Activated T-helper 1 cell treated with anti-CD3 and anti-CD28 coated beads, Interleukin-12 subunit alpha, Interleukin-12 subunit beta, Interleukin-2, Interleukin-4 antibody, amounts not matched to agents 30 ng/mL and 10 ng/mL and 1 ng/mL, durations not matched to agents 14 hours and 24 hours and 36 hours (primary cell): ENCODE measurements at regions of chr11 and their contacts with region 1.

Region 1: DNA sequence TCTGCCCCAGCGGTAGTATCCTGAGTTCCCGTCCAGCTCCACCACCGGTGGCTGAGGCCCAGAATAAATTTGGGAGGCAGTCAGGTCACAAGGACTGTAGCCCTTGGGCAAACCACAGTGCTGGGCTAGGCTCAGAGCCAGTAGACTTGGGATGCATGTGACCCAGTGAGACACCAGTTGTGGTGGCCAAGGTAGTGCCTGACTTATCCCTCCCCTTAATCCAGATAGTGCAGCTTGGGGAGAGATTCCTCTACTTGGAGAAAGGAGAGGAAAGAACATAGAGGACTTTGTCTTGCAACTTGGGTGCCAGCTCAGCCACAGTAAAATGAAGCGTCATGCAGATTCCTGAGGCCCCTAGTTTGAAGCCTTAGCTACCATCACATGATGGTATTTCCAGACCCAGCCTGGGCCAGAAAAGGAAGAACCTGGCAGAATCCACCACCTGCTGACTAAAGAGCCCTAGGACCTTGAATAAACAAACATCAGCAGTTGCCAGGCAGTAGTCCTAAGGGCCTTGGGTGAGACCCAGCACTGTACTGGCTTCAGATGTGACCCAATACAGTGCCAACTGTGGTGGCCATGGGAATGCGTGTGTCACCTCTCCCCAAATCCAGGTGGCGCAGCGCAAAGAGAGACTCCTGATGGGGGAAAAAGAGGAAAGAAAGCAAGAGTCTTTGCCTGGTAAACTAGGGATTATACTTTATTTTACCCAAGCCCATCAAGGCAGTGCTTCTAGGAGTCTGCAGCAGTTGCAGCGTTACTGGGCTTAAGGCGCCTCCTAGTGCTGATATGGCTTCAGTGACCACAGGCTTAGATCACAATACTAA is 17.0 kb upstream of the DDX10 start:
- DNase-seq: peak; percentile 47
- H3K4me3 Mint-ChIP-seq: no peak overlapping the region
- H3K27ac Mint-ChIP-seq: no peak overlapping the region
- H3K4me1 Mint-ChIP-seq: no peaks in the 10 kb centered on the region
- H3K27me3 Mint-ChIP-seq: peaks cover 4% of the 10 kb centered on the region

Region 2: GRCh38 chr11:108121274-108122155 is 526.4 kb before region 1 on chr11 and contains the start of gene ACAT1:
- intact Hi-C with region 1: loop called (anchors 1 kb)
- DNase-seq: peak; percentile 95
- H3K4me3 Mint-ChIP-seq: peak within 1 kb of the TSS; percentile 97
- H3K27ac Mint-ChIP-seq: peak within 1 kb of the TSS; percentile 82
- H3K4me1 Mint-ChIP-seq: peaks cover 36% of the 10 kb centered on the region
- H3K27me3 Mint-ChIP-seq: no peaks in the 10 kb centered on the region
- total RNA-seq, gene ACAT1: 52.8 and 56.8 TPM in 2 replicates

Region 3: GRCh38 chr11:108340970-108341369 is 306.9 kb before region 1 on chr11:
- intact Hi-C with region 1: loop called (anchors 5 kb)
- DNase-seq: no peak
- H3K4me3 Mint-ChIP-seq: no peak overlapping the region
- H3K27ac Mint-ChIP-seq: no peak overlapping the region
- H3K4me1 Mint-ChIP-seq: peaks cover 6% of the 10 kb centered on the region
- H3K27me3 Mint-ChIP-seq: no peaks in the 10 kb centered on the region

Region 4: GRCh38 chr11:108414958-108415357 is 233.0 kb before region 1 on chr11:
- intact Hi-C with region 1: loop called (anchors 1 kb)
- DNase-seq: no peak
- H3K4me3 Mint-ChIP-seq: no peak overlapping the region
- H3K27ac Mint-ChIP-seq: no peak overlapping the region
- H3K4me1 Mint-ChIP-seq: no peaks in the 10 kb centered on the region
- H3K27me3 Mint-ChIP-seq: no peaks in the 10 kb centered on the region

Region 5: DNA sequence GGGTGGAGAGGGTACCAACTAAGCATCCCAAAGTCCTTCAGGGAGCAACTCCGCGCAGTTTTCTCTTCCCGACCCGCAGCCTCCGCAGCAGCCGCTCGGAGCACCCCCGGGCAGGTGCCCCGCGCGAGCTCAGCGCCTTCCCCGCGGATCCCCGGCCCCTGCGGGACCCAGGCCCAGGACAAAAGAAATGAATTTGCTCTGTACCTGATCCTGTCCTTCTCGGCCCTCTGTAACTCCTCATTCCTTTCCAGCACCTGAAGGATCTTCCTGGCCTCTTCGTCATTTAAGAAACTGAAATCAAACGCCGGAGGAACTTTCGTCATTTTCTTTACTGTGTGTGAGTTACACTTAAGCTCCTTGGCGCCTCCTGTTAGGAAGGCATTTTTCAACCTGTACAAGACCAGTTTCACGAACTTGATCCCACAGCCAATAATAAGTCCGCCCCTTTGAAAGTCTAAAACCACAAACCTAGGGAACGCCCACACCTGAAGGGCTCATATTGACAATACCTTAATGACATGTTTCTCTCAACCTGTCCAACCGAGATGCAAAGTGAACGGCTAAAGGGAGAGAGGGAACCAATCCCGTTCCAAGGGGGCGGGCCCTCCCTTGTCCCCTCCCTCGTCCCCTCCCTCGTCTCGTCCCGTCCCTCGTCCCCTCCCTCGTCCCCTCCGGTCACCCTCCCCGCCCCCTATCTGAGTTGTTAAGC is 54.5 kb before region 1 on chr11 and contains the start of gene EXPH5:
- intact Hi-C with region 1: loop called (anchors 1 kb)
- DNase-seq: peak; percentile 76
- H3K4me3 Mint-ChIP-seq: peak within 1 kb of the TSS; percentile 89
- H3K27ac Mint-ChIP-seq: peak within 1 kb of the TSS; percentile 75
- H3K4me1 Mint-ChIP-seq: peaks cover 23% of the 10 kb centered on the region
- H3K27me3 Mint-ChIP-seq: peaks cover 29% of the 10 kb centered on the region
- total RNA-seq, gene EXPH5: 0.56 and 0.65 TPM in 2 replicates

Region 6: DNA sequence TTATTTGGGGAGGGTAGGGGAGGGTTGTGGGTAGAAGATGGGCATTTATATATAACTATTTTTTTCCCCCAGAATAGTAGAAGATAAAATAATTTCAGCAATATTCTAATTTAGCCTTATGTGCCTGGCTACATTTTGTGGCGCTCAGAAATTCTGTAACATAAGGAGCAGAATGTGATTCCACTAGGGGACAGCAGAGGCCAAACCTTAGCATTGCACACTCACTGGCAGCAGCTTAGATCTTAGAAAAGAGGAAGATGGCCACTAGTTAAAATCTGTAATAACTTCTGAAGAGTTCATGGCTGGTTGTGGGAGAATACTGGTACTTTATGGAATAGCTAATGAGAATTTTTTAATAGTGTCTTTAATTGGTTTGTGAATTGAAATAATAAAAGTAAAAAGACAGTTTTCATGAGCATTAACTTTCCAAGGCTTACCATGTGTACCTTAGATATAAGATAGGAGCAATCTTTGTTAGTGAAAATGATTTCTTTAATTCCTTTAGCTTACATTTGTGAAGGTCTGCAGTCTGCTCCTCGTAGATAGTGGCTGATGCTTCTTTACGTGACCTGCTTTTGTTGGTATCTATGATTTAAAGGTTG is 50.1 kb after region 1 on chr11:
- intact Hi-C with region 1: no loop called
- DNase-seq: peak; percentile 5
- H3K4me3 Mint-ChIP-seq: no peak overlapping the region
- H3K27ac Mint-ChIP-seq: no peak overlapping the region
- H3K4me1 Mint-ChIP-seq: no peaks in the 10 kb centered on the region
- H3K27me3 Mint-ChIP-seq: no peaks in the 10 kb centered on the region